Activated CD4-positive, alpha-beta memory T cell treated with anti-CD3 and anti-CD28 coated beads, Interleukin-2, amount 10 ng/mL, durations not matched to agents 7 days and 5 days (primary cell): ENCODE measurements at regions of chr1 and their contacts with region 1.

Region 1: GRCh38 chr1:174262349-174263241 is 103.3 kb downstream of the RABGAP1L start:
- DNase-seq: no peak
- H3K4me3 Mint-ChIP-seq: no peak overlapping the region
- H3K27ac Mint-ChIP-seq: no peak overlapping the region
- H3K4me1 Mint-ChIP-seq: no peaks in the 10 kb centered on the region
- H3K27me3 Mint-ChIP-seq: no peaks in the 10 kb centered on the region

Region 2: GRCh38 chr1:173937062-173937461 is 325.5 kb before region 1 on chr1:
- CTCF ChIA-PET with region 1: no interaction called
- POLR2A ChIA-PET with region 1: no interaction called
- DNase-seq: no peak
- H3K4me3 Mint-ChIP-seq: no peak overlapping the region
- H3K27ac Mint-ChIP-seq: no peak overlapping the region
- H3K4me1 Mint-ChIP-seq: peaks cover 5% of the 10 kb centered on the region
- H3K27me3 Mint-ChIP-seq: no peaks in the 10 kb centered on the region

Region 3: DNA sequence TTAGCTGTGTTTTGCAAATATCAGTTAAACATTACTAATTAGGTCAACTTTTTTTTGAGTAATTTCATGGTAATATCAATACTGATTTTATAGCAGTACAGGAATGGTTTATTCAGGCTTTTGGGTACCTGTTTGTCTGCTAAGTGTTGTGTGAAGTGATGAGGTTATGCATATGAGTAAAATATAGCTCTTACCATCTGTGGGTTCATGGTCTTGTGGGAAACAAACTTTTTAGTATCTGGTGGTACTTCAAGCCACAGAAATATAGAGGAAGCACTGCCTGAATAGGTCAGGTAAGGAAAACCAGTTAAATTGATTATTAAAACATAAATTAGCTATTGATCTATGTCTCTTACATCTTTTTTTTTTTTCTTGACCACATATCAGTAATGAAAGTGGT is 10.6 kb after region 1 on chr1:
- CTCF ChIA-PET with region 1: interaction called, 19 read pairs
- POLR2A ChIA-PET with region 1: no interaction called
- DNase-seq: no peak
- H3K4me3 Mint-ChIP-seq: no peak overlapping the region
- H3K27ac Mint-ChIP-seq: no peak overlapping the region
- H3K4me1 Mint-ChIP-seq: no peaks in the 10 kb centered on the region
- H3K27me3 Mint-ChIP-seq: no peaks in the 10 kb centered on the region

Region 4: GRCh38 chr1:174726167-174726879 is 463.7 kb after region 1 on chr1:
- CTCF ChIA-PET with region 1: interaction called, 23 read pairs
- POLR2A ChIA-PET with region 1: no interaction called
- DNase-seq: no peak
- H3K4me3 Mint-ChIP-seq: no peak overlapping the region
- H3K27ac Mint-ChIP-seq: no peak overlapping the region
- H3K4me1 Mint-ChIP-seq: no peaks in the 10 kb centered on the region
- H3K27me3 Mint-ChIP-seq: no peaks in the 10 kb centered on the region

Region 5: GRCh38 chr1:174743654-174744561 is 481.3 kb after region 1 on chr1:
- CTCF ChIA-PET with region 1: interaction called, 19 read pairs
- POLR2A ChIA-PET with region 1: no interaction called
- DNase-seq: no peak
- H3K4me3 Mint-ChIP-seq: no peak overlapping the region
- H3K27ac Mint-ChIP-seq: no peak overlapping the region
- H3K4me1 Mint-ChIP-seq: no peaks in the 10 kb centered on the region
- H3K27me3 Mint-ChIP-seq: no peaks in the 10 kb centered on the region